Heart left ventricle (tissue), 16 donors: ENCODE measurements at regions of chr6 and their contacts with region 1.

Region 1: DNA sequence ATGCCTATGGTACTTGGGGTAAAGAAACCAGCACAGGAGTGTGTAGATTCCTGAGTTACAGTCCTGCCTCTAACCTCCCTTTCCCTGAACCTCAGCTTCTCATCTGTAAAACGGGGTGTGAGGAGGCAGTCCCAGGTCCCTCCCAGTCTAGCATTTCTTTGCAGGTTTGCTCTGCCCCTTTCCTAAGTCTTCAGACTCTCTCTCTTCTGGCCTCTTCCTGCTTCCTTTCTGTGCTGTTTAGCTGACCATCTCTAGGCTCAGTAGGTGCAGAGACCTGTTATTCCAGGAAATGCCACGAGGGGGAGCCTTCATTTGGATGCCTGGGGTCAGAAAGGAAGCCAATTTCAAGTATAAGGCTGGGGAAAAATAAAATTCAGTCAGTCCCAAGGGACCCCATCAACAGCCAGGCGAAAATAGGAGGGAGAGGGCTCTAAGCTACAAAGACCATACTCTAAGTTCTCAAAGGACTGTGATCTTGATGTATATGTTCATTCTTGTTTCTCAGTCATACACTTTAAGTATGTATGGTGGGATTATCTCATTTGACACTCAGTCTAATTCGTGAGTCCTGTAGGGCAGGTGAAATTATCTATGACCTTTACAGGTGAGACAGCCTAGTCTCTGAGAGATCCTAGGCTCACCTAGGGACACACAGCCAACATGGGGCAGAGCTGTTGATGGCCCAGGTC is 89.1 kb downstream of the NCR2 start:
- DNase-seq: peak in 4 of 5 donors; percentile 73 to 82 (median 78)
- ATAC-seq: peak; percentile 40 to 62 (median 41)
- H3K4me3 ChIP-seq: no peak overlapping the region
- H3K27ac ChIP-seq: no peak overlapping the region
- H3K4me1 ChIP-seq: peaks cover 2 to 34% (median 24%) of the 10 kb centered on the region in 12 donors
- H3K27me3 ChIP-seq: peaks cover 0 to 42% (median 0%) of the 10 kb centered on the region in 9 donors
- CTCF ChIP-seq: peak; percentile 75 to 87 (median 82)
- POLR2A ChIP-seq: no peak

Region 2: DNA sequence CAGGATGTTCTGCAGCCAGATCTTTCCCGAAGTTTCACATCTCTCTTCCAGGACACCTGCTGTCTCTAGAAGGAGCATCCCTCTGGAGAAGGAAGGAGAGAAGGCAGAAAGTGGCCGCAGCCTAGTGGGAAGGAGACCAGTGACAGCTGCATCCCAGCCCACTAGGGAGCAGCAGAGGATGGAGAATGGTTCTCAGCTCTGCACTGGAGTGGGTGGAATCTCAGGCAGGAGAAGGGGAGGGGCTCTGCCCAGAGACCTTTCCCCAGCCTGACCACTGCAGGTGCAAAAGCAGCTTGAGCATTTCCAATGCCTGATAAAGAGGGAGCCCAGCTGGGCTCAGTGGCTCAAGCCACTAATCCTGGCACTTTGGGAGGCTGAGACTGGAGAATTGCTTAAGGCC is 56.8 kb before region 1 on chr6:
- intact Hi-C with region 1: loop called in 4 of 10 experiments (anchors 2 to 5 kb)
- DNase-seq: peak in 4 of 5 donors; percentile 45 to 50 (median 48)
- ATAC-seq: peak; percentile 40 to 78 (median 76)
- H3K4me3 ChIP-seq: no peak overlapping the region
- H3K27ac ChIP-seq: no peak overlapping the region
- H3K4me1 ChIP-seq: peaks cover 0 to 23% (median 14%) of the 10 kb centered on the region in 12 donors
- H3K27me3 ChIP-seq: peaks cover 6 to 64% (median 29%) of the 10 kb centered on the region in 9 donors
- CTCF ChIP-seq: peak; percentile 23 to 74 (median 60)
- POLR2A ChIP-seq: no peak

Region 3: GRCh38 chr6:41449399-41450245 is 25.1 kb after region 1 on chr6:
- intact Hi-C with region 1: loop called in 2 of 10 experiments (anchors 2 kb)
- DNase-seq: peak in 3 of 5 donors; percentile 49 to 64 (median 61)
- ATAC-seq: peak in 3 of 4 donors; percentile 17 to 38 (median 38)
- H3K4me3 ChIP-seq: no peak overlapping the region
- H3K27ac ChIP-seq: peak overlapping the region in 9 of 12 donors; percentile 76 to 96 (median 87)
- H3K4me1 ChIP-seq: peaks cover 0 to 37% (median 25%) of the 10 kb centered on the region in 12 donors
- H3K27me3 ChIP-seq: no peaks in the 10 kb centered on the region
- CTCF ChIP-seq: no peak
- POLR2A ChIP-seq: no peak

Region 4: GRCh38 chr6:41463062-41463930 is 38.8 kb after region 1 on chr6:
- intact Hi-C with region 1: loop called in 3 of 10 experiments (anchors 5 kb)
- DNase-seq: peak; percentile 66 to 85 (median 73)
- ATAC-seq: peak; percentile 83 to 95 (median 89)
- H3K4me3 ChIP-seq: no peak overlapping the region
- H3K27ac ChIP-seq: no peak overlapping the region
- H3K4me1 ChIP-seq: peaks cover 0 to 5% (median 0%) of the 10 kb centered on the region in 12 donors
- H3K27me3 ChIP-seq: peaks cover 0 to 14% (median 3%) of the 10 kb centered on the region in 9 donors
- CTCF ChIP-seq: peak; percentile 54 to 78 (median 69)
- POLR2A ChIP-seq: no peak

Region 5: DNA sequence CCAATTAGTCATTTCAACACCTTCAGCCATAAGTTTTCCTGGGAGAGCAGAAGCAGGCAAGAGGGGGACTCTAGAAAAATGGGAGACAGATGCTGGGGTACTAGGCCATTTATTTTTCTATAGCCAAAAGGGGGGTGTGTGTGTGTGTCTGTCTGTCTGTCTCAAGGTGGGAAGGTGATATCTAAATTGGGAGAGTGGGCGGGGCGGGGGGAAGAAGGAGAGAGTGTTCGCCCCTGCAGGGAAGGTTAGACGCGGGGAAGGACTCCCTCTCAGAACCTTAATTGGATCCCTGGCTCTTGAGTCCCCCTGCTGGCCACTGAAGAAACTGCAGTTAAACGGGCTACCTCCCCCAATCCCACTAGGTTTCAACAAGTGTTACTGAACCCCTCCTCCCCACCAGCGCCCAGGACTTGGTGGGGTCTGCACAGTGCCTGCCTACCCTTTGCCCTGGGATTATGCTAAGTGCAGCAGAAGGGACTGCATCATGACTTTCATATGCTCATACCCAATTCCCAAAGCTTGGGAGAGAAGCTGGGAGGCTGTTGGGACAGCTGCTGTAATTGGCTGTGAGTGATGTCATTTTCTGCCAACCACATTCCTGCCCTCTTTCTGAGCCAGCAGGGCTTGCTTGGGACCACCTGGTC is 167.5 kb after region 1 on chr6:
- intact Hi-C with region 1: loop called in 9 of 10 experiments (anchors 1 to 5 kb)
- DNase-seq: peak in 4 of 5 donors; percentile 58 to 71 (median 64)
- ATAC-seq: peak; percentile 54 to 71 (median 60)
- H3K4me3 ChIP-seq: no peak overlapping the region
- H3K27ac ChIP-seq: no peak overlapping the region
- H3K4me1 ChIP-seq: no peaks in the 10 kb centered on the region
- H3K27me3 ChIP-seq: no peaks in the 10 kb centered on the region
- CTCF ChIP-seq: peak; percentile 80 to 96 (median 91)
- POLR2A ChIP-seq: peak in 1 of 2 donors; percentile 14